Left ventricle myocardium inferior (tissue), 1 donor: ENCODE measurements at regions of chr6 and their contacts with region 1.

Region 1: GRCh38 chr6:68634726-68635411 is at the start of gene ADGRB3:
- DNase-seq: peak; percentile 86
- H3K4me3 ChIP-seq: peak within 1 kb of the TSS; percentile 74
- H3K27ac ChIP-seq: peak within 1 kb of the TSS; percentile 89
- H3K4me1 ChIP-seq: peaks cover 24% of the 10 kb centered on the region
- H3K27me3 ChIP-seq: peaks cover 68% of the 10 kb centered on the region
- CTCF ChIP-seq: peak; percentile 39
- total RNA-seq, gene ADGRB3: 1.5 TPM

Region 2: GRCh38 chr6:68778356-68779020 is 143.6 kb after region 1 on chr6:
- intact Hi-C with region 1: loop called (anchors 5 kb)
- DNase-seq: no peak
- H3K4me3 ChIP-seq: no peak overlapping the region
- H3K27ac ChIP-seq: peak overlapping the region; percentile 29
- H3K4me1 ChIP-seq: no peaks in the 10 kb centered on the region
- H3K27me3 ChIP-seq: no peaks in the 10 kb centered on the region
- CTCF ChIP-seq: peak; percentile 75